ENCODE measurements at regions of chr10 and their contacts with region 1.

Region 1: GRCh38 chr10:71319042-71319799 is at the start of gene SLC29A3:
- DNase-seq: peak; percentile 74
- H3K4me3 ChIP-seq: peak within 1 kb of the TSS; percentile 50 to 57 (median 55)
- H3K27ac ChIP-seq: no peak within 1 kb of the TSS
- H3K4me1 ChIP-seq: peaks cover 6% of the 10 kb centered on the region
- H3K27me3 ChIP-seq: no peaks in the 10 kb centered on the region
- CTCF ChIP-seq: peak; percentile 54 to 90
- total RNA-seq, gene SLC29A3: 3.5 to 8.2 TPM

Region 2: GRCh38 chr10:71359364-71360046 is 40.3 kb after region 1 on chr10:
- CTCF ChIA-PET with region 1: no interaction called
- dilution Hi-C with region 1: no loop called
- in situ Hi-C with region 1: no loop called
- intact Hi-C with region 1: loop called (anchors 2 kb)
- DNase-seq: no peak
- H3K4me3 ChIP-seq: no peak overlapping the region
- H3K27ac ChIP-seq: no peak overlapping the region
- H3K4me1 ChIP-seq: peaks cover 8% of the 10 kb centered on the region
- H3K27me3 ChIP-seq: no peaks in the 10 kb centered on the region
- CTCF ChIP-seq: no peak

Region 3: GRCh38 chr10:71383972-71384687 is 64.9 kb after region 1 on chr10:
- CTCF ChIA-PET with region 1: no interaction called
- dilution Hi-C with region 1: no loop called
- in situ Hi-C with region 1: loop called in 1 of 2 experiments (anchors 10 kb)
- intact Hi-C with region 1: no loop called
- DNase-seq: no peak
- H3K4me3 ChIP-seq: no peak overlapping the region
- H3K27ac ChIP-seq: no peak overlapping the region
- H3K4me1 ChIP-seq: no peaks in the 10 kb centered on the region
- H3K27me3 ChIP-seq: no peaks in the 10 kb centered on the region
- CTCF ChIP-seq: peak; percentile 93 to 94

Region 4: DNA sequence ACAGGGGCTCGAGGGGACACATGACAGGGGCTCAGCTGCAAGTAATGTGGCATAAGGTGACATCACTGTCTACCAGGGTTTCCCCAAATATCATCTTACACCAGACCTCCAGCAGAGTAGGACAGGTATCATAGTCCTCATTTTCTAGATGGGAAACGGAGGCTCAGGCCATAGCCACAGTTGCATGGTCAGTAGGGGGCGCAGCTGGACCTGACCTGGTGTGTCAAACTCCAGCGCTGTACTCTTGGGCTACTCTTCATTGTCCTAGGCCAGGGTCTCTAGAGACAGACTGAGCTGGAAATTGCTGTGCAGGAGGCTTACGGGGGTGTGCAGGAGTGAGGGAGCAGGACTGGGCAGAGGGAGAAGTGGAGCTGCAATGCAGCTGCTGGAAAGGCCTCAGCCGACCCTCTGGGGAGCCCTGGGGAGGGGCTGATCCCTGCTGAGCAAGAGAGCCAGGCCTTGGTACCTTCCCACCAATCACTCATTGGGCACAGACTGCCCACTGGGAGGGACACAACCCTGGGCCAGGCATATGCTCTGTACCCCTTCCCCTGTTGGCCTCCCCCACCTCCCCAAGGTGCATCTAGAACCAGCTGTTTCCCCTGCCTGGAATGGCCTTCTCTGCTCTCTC is 167.4 kb after region 1 on chr10:
- CTCF ChIA-PET with region 1: no interaction called
- dilution Hi-C with region 1: no loop called
- in situ Hi-C with region 1: no loop called
- intact Hi-C with region 1: loop called (anchors 2 kb)
- DNase-seq: peak; percentile 19
- H3K4me3 ChIP-seq: no peak overlapping the region
- H3K27ac ChIP-seq: no peak overlapping the region
- H3K4me1 ChIP-seq: no peaks in the 10 kb centered on the region
- H3K27me3 ChIP-seq: no peaks in the 10 kb centered on the region
- CTCF ChIP-seq: peak; percentile 63 to 82

Region 5: GRCh38 chr10:71708301-71708703 is 389.1 kb after region 1 on chr10:
- CTCF ChIA-PET with region 1: no interaction called
- dilution Hi-C with region 1: no loop called
- in situ Hi-C with region 1: loop called in 1 of 2 experiments (anchors 10 kb)
- intact Hi-C with region 1: loop called (anchors 2 kb)
- DNase-seq: no peak
- H3K4me3 ChIP-seq: no peak overlapping the region
- H3K27ac ChIP-seq: no peak overlapping the region
- H3K4me1 ChIP-seq: peaks cover 28% of the 10 kb centered on the region
- H3K27me3 ChIP-seq: no peaks in the 10 kb centered on the region
- CTCF ChIP-seq: peak; percentile 79 to 87

Measured in mammary epithelial cell (primary cell).